MCF 10A (cell line): ENCODE measurements at regions of chr11 and their contacts with region 1.

Region 1: DNA sequence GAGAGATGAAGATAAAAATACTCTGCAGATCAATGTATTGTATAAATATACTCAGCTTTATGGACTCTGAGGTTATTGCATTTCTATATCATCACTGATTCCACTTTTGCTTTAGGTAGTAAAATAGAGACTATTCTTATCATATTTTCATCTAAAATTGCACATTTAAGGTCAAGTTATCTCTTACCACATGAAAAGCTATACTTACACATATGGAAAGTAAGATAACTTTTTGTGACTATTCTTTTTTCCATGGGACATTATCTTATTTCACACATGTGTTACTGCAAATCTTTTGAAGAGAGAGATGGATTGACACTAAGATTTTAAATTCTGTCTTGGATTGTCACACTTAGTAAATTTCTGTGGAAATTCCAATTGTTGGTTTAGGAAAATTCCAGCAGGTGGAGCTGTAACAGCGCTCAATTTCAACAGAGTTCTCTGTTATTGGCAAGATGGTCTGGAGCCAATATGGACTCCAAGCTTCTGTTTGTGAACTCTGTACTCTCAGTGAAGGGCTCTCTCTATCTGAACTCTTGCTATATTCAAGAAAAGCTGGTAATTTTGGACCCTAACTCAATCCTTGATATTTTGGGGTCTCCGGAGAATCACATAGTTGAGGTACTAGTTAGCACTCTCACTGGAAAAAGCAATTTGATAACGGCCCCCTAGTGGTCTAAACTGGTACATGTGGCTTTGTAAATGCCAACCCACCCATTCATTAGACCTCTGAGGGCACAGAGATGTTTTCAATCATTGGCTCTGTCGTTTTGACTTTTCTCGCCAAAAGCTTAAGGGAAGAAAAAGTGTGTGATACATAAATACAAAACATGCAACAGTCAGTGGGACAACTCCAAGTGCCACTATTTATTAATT is 429.7 kb downstream of the ETS1 start:
- DNase-seq: peak; percentile 78
- H3K4me3 Mint-ChIP-seq: peak overlapping the region; percentile 33
- H3K27ac Mint-ChIP-seq: peak overlapping the region; percentile 42
- H3K4me1 Mint-ChIP-seq: no peaks in the 10 kb centered on the region
- H3K27me3 Mint-ChIP-seq: no peaks in the 10 kb centered on the region
- CTCF ChIP-seq: peak; percentile 88

Region 2: GRCh38 chr11:127843483-127844396 is 313.9 kb before region 1 on chr11:
- CTCF ChIA-PET with region 1: interaction called, 7 read pairs
- POLR2A ChIA-PET with region 1: no interaction called
- intact Hi-C with region 1: loop called (anchors 5 kb)
- DNase-seq: peak; percentile 80
- H3K4me3 Mint-ChIP-seq: no peak overlapping the region
- H3K27ac Mint-ChIP-seq: no peak overlapping the region
- H3K4me1 Mint-ChIP-seq: no peaks in the 10 kb centered on the region
- H3K27me3 Mint-ChIP-seq: no peaks in the 10 kb centered on the region
- CTCF ChIP-seq: peak; percentile 70

Region 3: DNA sequence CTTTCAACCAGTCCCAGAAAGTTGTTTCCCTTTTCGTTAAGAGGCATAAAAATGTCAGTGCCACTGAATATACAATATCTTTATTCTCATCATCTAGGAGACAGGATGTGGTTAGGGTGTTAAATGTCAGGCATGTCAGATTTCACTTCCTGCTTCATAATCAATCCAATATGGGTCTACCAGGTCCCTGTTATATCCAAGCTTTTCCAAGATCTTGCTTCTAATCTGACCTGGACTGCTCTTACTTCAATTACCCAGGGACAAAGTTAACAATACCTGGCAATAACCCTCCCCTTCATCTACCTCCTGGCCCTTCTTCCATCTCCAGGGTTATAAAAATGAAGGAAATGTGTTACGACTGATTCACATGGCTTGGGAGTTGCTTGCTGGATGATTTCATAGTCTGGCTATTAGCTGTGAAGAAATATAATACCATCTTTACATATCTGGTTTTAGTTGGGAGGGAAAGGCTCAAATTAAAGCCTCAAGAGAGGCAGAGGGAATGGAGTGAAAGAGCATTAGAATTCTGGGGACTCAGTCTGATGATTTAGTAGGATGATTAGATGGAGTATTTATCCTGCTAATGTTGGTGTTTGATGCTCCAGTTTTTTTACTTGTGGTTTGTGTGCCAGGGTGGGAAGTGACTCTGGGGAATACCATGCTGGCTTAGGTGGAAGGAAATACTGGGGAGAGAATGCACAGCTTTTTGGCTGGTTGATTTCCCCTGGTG is 104.6 kb before region 1 on chr11:
- CTCF ChIA-PET with region 1: interaction called, 10 read pairs
- POLR2A ChIA-PET with region 1: no interaction called
- intact Hi-C with region 1: no loop called
- DNase-seq: peak; percentile 20
- H3K4me3 Mint-ChIP-seq: no peak overlapping the region
- H3K27ac Mint-ChIP-seq: peak overlapping the region; percentile 90
- H3K4me1 Mint-ChIP-seq: peaks cover 47% of the 10 kb centered on the region
- H3K27me3 Mint-ChIP-seq: no peaks in the 10 kb centered on the region
- CTCF ChIP-seq: no peak

Region 4: DNA sequence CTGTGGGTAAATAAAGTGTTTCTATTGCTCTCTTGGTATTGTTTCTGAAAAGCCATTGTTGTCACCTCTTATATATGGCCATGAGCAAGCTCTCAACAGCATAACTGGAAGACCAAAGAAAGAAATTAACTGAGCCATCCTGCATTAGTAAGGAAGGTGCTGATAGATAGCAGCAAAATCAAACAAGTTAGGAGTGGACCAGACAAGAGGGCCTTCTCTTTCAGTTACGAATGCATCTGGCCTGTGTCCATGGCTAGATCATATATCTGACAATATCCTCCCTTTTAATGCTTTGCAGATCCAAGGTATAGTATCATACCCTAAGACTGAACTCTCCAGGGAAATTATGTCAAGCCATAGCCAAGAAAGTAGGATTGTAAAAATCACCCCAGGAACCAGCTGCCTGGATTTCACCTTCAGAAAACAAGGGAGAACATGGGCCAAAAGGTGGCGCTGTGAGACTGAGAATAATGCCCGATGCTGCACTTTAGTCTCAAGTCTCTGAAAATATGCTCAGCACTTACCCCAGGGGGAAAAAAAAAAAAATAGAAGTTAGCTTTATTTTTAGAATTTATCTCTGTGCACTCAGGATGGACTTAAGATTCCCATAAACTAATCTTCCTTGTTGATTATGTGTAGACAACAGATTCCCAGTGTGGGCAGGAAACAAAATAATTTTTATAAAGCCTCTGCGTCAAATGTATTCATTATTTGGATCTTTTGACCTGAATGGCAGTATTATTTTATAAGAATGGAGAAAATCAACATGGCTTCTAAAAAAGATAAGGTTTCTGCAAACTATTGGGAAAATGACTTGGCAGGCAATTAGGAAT is 14.6 kb after region 1 on chr11:
- CTCF ChIA-PET with region 1: interaction called, 137 read pairs
- POLR2A ChIA-PET with region 1: no interaction called
- intact Hi-C with region 1: no loop called
- DNase-seq: peak; percentile 87
- H3K4me3 Mint-ChIP-seq: no peak overlapping the region
- H3K27ac Mint-ChIP-seq: peak overlapping the region; percentile 88
- H3K4me1 Mint-ChIP-seq: peaks cover 23% of the 10 kb centered on the region
- H3K27me3 Mint-ChIP-seq: no peaks in the 10 kb centered on the region
- CTCF ChIP-seq: peak; percentile 78

Region 5: DNA sequence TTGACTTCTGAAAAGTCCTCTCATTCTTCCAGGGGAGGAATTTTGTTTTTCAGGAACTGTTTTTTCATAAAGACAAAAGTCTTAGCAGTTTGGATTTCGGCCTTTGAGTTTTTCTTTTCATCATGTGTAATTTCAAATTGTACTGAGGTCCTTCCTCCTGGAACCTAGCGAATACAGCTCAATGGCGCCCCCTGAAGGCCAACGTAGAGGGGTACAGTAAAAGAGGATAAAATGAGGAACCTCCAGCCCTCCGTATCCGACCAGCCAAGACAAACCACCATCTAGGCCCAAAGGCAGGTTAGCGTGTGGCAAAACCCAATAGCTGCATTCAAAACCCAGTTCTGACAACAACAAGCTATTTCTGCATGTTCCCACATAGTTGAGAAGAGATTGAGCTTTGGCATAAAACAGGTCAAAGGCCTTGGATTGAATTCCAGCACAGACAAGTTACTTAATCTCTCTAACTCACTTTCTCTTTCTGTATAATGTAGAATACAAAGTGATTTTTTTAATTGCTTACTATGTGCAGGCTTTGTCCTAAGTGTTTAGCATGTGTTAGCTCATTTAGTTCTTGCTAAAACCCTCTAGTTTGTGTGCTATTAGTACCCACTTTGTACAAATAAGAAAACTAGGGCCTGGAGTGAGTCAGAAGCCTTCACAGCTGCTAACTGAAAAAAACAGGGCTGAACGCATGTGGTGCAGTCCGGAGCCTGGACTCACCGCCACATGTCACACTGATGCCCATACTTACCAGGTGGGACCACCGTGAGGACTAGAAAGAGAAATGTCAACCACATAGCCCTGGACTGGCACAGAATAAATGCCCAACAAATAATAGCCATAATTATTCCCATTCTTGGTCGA is 472.9 kb after region 1 on chr11:
- CTCF ChIA-PET with region 1: interaction called, 88 read pairs
- POLR2A ChIA-PET with region 1: interaction called, 4 read pairs
- intact Hi-C with region 1: loop called (anchors 1 kb)
- DNase-seq: peak; percentile 90
- H3K4me3 Mint-ChIP-seq: no peak overlapping the region
- H3K27ac Mint-ChIP-seq: no peak overlapping the region
- H3K4me1 Mint-ChIP-seq: no peaks in the 10 kb centered on the region
- H3K27me3 Mint-ChIP-seq: no peaks in the 10 kb centered on the region
- CTCF ChIP-seq: peak; percentile 84

Region 6: GRCh38 chr11:128956401-128957201 is 798.9 kb after region 1 on chr11:
- CTCF ChIA-PET with region 1: interaction called, 13 read pairs
- POLR2A ChIA-PET with region 1: no interaction called
- intact Hi-C with region 1: no loop called
- DNase-seq: peak; percentile 81
- H3K4me3 Mint-ChIP-seq: no peak overlapping the region
- H3K27ac Mint-ChIP-seq: no peak overlapping the region
- H3K4me1 Mint-ChIP-seq: peaks cover 7% of the 10 kb centered on the region
- H3K27me3 Mint-ChIP-seq: no peaks in the 10 kb centered on the region
- CTCF ChIP-seq: peak; percentile 73